ENCODE measurements at regions of chr17 and their contacts with region 1.

Region 1: GRCh38 chr17:49694847-49695683 is 12.7 kb downstream of the SLC35B1 start:
- DNase-seq: peak; percentile 45 to 78 (median 62)
- ATAC-seq: peak; percentile 67
- H3K4me3 ChIP-seq: no peak overlapping the region
- H3K4me3 Mint-ChIP-seq: peak overlapping the region in 6 of 10 donors; percentile 23 to 62 (median 57)
- H3K27ac ChIP-seq: no peak overlapping the region
- H3K27ac Mint-ChIP-seq: peak overlapping the region in 8 of 9 donors; percentile 76 to 92 (median 86)
- H3K4me1 ChIP-seq: peaks cover 13 to 30% of the 10 kb centered on the region in 2 donors
- H3K4me1 Mint-ChIP-seq: peaks cover 28 to 66% (median 50%) of the 10 kb centered on the region in 7 donors
- H3K27me3 ChIP-seq: no peaks in the 10 kb centered on the region
- H3K27me3 Mint-ChIP-seq: no peaks in the 10 kb centered on the region

Region 2: DNA sequence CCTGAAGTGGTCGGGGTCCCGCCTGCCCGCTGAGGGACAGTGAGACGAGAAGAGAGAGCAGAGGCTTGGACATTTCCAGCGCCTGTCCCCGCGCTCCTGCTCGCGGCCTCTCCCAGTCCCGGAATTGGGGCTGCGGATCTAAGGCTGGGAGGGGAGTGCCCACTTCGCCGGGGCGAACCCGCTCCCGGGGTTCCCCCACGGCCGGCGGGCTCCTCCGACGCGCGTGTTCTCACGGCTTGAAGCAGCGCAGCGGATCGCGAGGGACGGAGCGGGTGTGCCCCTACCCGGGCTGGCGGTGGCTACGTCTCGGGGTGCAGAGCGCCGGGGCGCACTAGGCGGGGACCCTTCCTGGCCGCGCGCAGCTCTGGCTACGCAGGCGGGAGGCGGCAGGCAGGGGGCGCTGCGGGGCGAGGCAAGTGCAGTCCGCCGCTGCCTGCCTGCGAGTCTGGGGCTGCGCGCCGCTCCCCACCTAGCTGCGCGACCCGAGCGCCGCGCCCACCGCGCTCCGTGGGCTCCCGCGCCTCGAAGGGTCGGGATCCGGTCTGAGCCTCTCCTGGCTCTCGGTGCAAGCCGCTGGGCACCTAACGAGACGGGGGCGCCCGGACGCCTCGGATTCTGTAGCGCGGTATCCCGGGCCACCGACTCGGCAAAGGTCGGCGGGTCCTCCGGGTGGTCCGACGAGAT is 198.7 kb before region 1 on chr17:
- CTCF ChIA-PET with region 1: no interaction called
- POLR2A ChIA-PET with region 1: no interaction called
- intact Hi-C with region 1: loop called in 1 of 2 experiments (anchors 5 kb)
- DNase-seq: peak; percentile 66 to 93 (median 83)
- ATAC-seq: peak; percentile 89
- H3K4me3 ChIP-seq: peak overlapping the region; percentile 67
- H3K4me3 Mint-ChIP-seq: peak overlapping the region; percentile 60 to 90 (median 80)
- H3K27ac ChIP-seq: no peak overlapping the region
- H3K27ac Mint-ChIP-seq: peak overlapping the region in 1 of 9 donors; percentile 31
- H3K4me1 ChIP-seq: peaks cover 27 to 29% of the 10 kb centered on the region in 2 donors
- H3K4me1 Mint-ChIP-seq: peaks cover 0 to 23% (median 22%) of the 10 kb centered on the region in 7 donors
- H3K27me3 ChIP-seq: peaks cover 5 to 30% of the 10 kb centered on the region in 2 donors
- H3K27me3 Mint-ChIP-seq: peaks cover 29 to 83% (median 34%) of the 10 kb centered on the region in 5 donors

Region 3: GRCh38 chr17:49567871-49568694 is 127.0 kb before region 1 on chr17:
- CTCF ChIA-PET with region 1: interaction called, 38 read pairs
- POLR2A ChIA-PET with region 1: interaction called, 12 read pairs
- intact Hi-C with region 1: loop called (anchors 1 kb)
- DNase-seq: peak; percentile 50 to 88 (median 72)
- ATAC-seq: peak; percentile 64
- H3K4me3 ChIP-seq: peak overlapping the region; percentile 15
- H3K4me3 Mint-ChIP-seq: peak overlapping the region; percentile 53 to 80 (median 70)
- H3K27ac ChIP-seq: no peak overlapping the region
- H3K27ac Mint-ChIP-seq: peak overlapping the region in 1 of 9 donors; percentile 7
- H3K4me1 ChIP-seq: peaks cover 6 to 7% of the 10 kb centered on the region in 2 donors
- H3K4me1 Mint-ChIP-seq: peaks cover 0 to 28% (median 15%) of the 10 kb centered on the region in 7 donors
- H3K27me3 ChIP-seq: no peaks in the 10 kb centered on the region
- H3K27me3 Mint-ChIP-seq: peaks cover under 1 to 38% (median 4%) of the 10 kb centered on the region in 5 donors

Region 4: GRCh38 chr17:49575579-49576087 is 119.4 kb before region 1 on chr17 and contains the start of gene NXPH3:
- CTCF ChIA-PET with region 1: interaction called, 38 read pairs
- POLR2A ChIA-PET with region 1: interaction called, 12 read pairs
- intact Hi-C with region 1: loop called (anchors 1 kb)
- DNase-seq: peak; percentile 29 to 87 (median 61)
- ATAC-seq: peak; percentile 84
- H3K4me3 ChIP-seq: peak within 1 kb of the TSS; percentile 41
- H3K4me3 Mint-ChIP-seq: peak within 1 kb of the TSS; percentile 27 to 83 (median 72)
- H3K27ac ChIP-seq: no peak within 1 kb of the TSS
- H3K27ac Mint-ChIP-seq: no peak within 1 kb of the TSS
- H3K4me1 ChIP-seq: peaks cover 4 to 9% of the 10 kb centered on the region in 2 donors
- H3K4me1 Mint-ChIP-seq: peaks cover 0 to 13% (median 4%) of the 10 kb centered on the region in 7 donors
- H3K27me3 ChIP-seq: peaks cover 4 to 15% of the 10 kb centered on the region in 2 donors
- H3K27me3 Mint-ChIP-seq: peaks cover 28 to 76% (median 29%) of the 10 kb centered on the region in 5 donors
- total RNA-seq, gene NXPH3: not detected

Region 5: DNA sequence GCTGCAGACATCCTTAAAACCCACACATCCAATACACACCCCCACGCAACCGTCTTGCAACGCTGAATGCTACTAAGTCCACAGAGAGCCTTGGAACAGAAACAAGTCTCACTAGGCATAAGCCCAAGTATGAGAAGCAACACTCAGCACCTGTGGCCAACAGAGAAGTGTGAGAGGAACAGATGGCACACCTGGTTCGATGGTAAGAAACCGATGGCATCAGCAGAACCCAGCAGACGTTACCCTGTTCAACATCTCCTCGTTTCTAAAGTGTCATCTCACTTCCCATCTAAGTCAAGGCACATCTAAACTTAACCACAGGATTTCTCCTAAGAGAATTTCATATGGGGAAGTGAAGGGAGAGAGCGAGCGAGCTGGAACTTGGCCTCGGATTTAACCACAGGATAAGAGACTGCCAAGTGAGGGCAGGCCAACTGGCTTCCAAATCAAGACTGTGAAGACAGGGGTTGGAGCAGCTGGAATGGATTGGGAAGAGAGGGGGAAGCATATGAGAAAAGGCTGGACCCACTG is 78.4 kb before region 1 on chr17:
- CTCF ChIA-PET with region 1: no interaction called
- POLR2A ChIA-PET with region 1: no interaction called
- intact Hi-C with region 1: loop called in 1 of 2 experiments (anchors 5 kb)
- DNase-seq: no peak
- ATAC-seq: no peak
- H3K4me3 ChIP-seq: no peak overlapping the region
- H3K4me3 Mint-ChIP-seq: no peak overlapping the region
- H3K27ac ChIP-seq: no peak overlapping the region
- H3K27ac Mint-ChIP-seq: peak overlapping the region in 1 of 9 donors; percentile 20
- H3K4me1 ChIP-seq: no peaks in the 10 kb centered on the region
- H3K4me1 Mint-ChIP-seq: peaks cover 0 to 14% (median 10%) of the 10 kb centered on the region in 7 donors
- H3K27me3 ChIP-seq: no peaks in the 10 kb centered on the region
- H3K27me3 Mint-ChIP-seq: no peaks in the 10 kb centered on the region

Region 6: GRCh38 chr17:49634485-49634860 is 60.6 kb before region 1 on chr17:
- CTCF ChIA-PET with region 1: no interaction called
- POLR2A ChIA-PET with region 1: interaction called, 5 read pairs
- intact Hi-C with region 1: loop called in 1 of 2 experiments (anchors 5 kb)
- DNase-seq: no peak
- ATAC-seq: no peak
- H3K4me3 ChIP-seq: no peak overlapping the region
- H3K4me3 Mint-ChIP-seq: no peak overlapping the region
- H3K27ac ChIP-seq: no peak overlapping the region
- H3K27ac Mint-ChIP-seq: peak overlapping the region in 4 of 9 donors; percentile 3 to 44 (median 9)
- H3K4me1 ChIP-seq: peaks cover 4 to 8% of the 10 kb centered on the region in 2 donors
- H3K4me1 Mint-ChIP-seq: peaks cover 8 to 81% (median 68%) of the 10 kb centered on the region in 7 donors
- H3K27me3 ChIP-seq: no peaks in the 10 kb centered on the region
- H3K27me3 Mint-ChIP-seq: no peaks in the 10 kb centered on the region

Region 7: GRCh38 chr17:49645654-49646053 is 49.4 kb before region 1 on chr17:
- CTCF ChIA-PET with region 1: no interaction called
- POLR2A ChIA-PET with region 1: no interaction called
- intact Hi-C with region 1: no loop called
- DNase-seq: no peak
- ATAC-seq: no peak
- H3K4me3 ChIP-seq: no peak overlapping the region
- H3K4me3 Mint-ChIP-seq: peak overlapping the region in 2 of 10 donors; percentile 3 to 48
- H3K27ac ChIP-seq: no peak overlapping the region
- H3K27ac Mint-ChIP-seq: peak overlapping the region in 7 of 9 donors; percentile 0 to 78 (median 45)
- H3K4me1 ChIP-seq: peaks cover 0 to 2% of the 10 kb centered on the region in 2 donors
- H3K4me1 Mint-ChIP-seq: peaks cover 28 to 68% (median 57%) of the 10 kb centered on the region in 7 donors
- H3K27me3 ChIP-seq: no peaks in the 10 kb centered on the region
- H3K27me3 Mint-ChIP-seq: no peaks in the 10 kb centered on the region